BJ (cell line): ENCODE measurements at regions of chr4 and their contacts with region 1.

Region 1: GRCh38 chr4:113394730-113395530 is 345.5 kb downstream of the ANK2 start:
- DNase-seq: peak; percentile 24
- H3K4me3 ChIP-seq: no peak overlapping the region
- H3K27me3 ChIP-seq: no peaks in the 10 kb centered on the region
- CTCF ChIP-seq: peak; percentile 67

Region 2: DNA sequence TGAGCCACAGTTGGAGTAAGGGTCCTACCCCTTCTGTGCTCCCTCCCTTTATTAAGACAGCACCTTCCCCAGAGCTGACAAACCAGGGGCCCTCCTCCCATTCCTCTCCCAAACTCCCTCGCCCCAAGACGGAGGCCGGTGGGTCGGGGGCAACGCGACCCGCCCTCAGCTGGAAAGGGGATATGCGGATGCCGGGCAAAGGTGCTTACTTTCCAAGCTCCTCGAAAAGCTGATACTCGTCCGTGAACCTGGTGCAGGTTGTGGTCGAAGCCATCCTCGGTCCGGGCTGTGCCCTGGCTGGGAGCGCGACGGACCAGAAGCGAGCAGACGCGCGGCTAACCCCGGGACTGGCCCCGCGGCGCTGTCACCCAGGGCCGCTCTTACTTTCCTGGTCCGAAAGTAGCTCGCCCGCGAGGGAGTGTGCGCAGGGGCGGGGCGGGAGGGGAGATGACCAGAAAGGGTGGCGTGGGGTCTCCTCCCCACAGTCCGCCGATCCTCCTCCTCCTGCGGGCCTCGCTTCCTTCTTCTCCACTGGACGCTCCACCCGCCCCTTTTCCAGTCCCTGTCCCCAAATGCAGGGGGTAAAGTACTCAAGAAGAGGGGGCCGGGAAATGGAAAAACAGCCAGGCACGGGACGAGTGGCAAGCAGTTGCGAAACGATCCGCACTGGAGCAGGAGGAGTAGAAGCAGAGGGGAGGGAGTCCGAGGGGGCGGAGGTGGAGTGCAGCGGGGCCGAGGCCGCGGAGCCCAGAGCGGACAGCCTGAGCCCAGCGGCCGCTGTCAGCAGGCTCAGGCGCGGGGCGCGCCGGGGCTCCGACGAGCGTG is 366.1 kb after region 1 on chr4:
- CTCF ChIA-PET with region 1: interaction called, 6 read pairs
- POLR2A ChIA-PET with region 1: interaction called, 10 read pairs
- DNase-seq: no peak
- H3K4me3 ChIP-seq: peak overlapping the region; percentile 89
- H3K27me3 ChIP-seq: no peaks in the 10 kb centered on the region
- CTCF ChIP-seq: no peak

Region 3: GRCh38 chr4:113971706-113972360 is 576.9 kb after region 1 on chr4:
- CTCF ChIA-PET with region 1: no interaction called
- POLR2A ChIA-PET with region 1: interaction called, 21 read pairs
- DNase-seq: no peak
- H3K4me3 ChIP-seq: no peak overlapping the region
- H3K27me3 ChIP-seq: no peaks in the 10 kb centered on the region
- CTCF ChIP-seq: no peak

Region 4: DNA sequence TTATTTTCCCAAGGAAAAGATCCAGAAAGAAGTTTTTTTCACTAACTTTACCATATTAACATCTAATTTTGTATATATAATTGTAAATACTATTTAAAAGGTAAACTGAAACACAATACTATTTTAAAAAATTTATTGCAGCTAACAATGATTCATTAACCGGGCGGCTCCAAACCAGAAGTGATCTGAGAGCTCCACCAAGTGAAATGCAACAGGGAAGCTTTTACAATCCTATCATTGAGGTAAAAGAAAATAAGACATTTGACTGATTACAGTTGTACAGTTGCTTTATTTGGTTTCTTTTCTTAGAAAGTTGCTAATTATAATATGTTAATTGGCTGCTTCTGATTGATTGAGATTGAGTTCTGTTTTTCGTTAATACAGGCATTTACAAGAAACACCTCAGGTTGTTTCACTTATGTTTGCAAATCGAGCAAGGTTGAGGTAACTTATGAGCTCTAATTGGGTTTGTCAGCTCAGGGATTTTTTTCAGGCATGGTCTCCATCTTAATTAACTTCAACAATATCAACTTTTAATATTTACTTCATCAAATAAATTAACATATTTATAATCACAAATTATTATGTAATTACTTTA is 983.5 kb after region 1 on chr4:
- CTCF ChIA-PET with region 1: interaction called, 33 read pairs
- POLR2A ChIA-PET with region 1: no interaction called
- DNase-seq: no peak
- H3K4me3 ChIP-seq: no peak overlapping the region
- H3K27me3 ChIP-seq: no peaks in the 10 kb centered on the region
- CTCF ChIP-seq: peak; percentile 63

Region 5: DNA sequence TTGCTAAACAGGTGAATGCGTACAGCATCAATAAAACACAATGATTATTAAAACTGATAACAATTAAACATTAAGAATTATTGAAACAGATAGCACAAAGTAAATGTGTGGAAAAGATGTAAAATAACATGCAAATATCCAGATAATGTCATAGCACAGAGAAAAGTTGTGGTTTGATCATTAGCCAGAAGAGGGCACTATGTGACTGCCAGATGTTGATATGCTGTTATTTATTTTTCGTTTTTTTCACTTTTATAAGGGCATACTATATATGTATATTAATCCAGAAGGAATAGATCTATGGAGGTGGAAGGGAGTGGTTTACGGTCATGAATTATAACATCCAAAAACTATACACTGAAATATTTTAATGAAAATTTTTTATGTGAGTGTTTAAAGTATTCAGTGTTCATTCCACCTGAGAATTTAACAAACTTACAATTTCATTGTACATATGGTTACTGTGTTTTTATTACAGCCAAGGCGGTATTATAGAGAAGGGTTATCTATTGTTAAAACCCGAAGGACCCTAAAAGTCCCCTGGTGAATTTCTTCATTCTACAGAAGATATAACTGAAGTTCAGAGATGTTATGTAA is 991.8 kb after region 1 on chr4:
- CTCF ChIA-PET with region 1: interaction called, 33 read pairs
- POLR2A ChIA-PET with region 1: no interaction called
- DNase-seq: no peak
- H3K4me3 ChIP-seq: no peak overlapping the region
- H3K27me3 ChIP-seq: peaks cover 12% of the 10 kb centered on the region
- CTCF ChIP-seq: peak; percentile 59